ENCODE measurements at regions of chr20 and their contacts with region 1.

Region 1: GRCh38 chr20:36808317-36809257 is 35.0 kb upstream of the DSN1 start:
- DNase-seq: peak; percentile 88
- ATAC-seq: peak; percentile 77
- H3K4me3 Mint-ChIP-seq: no peak overlapping the region
- H3K27ac Mint-ChIP-seq: no peak overlapping the region
- H3K4me1 Mint-ChIP-seq: no peaks in the 10 kb centered on the region
- H3K27me3 Mint-ChIP-seq: no peaks in the 10 kb centered on the region
- CTCF ChIP-seq: peak; percentile 97

Region 2: DNA sequence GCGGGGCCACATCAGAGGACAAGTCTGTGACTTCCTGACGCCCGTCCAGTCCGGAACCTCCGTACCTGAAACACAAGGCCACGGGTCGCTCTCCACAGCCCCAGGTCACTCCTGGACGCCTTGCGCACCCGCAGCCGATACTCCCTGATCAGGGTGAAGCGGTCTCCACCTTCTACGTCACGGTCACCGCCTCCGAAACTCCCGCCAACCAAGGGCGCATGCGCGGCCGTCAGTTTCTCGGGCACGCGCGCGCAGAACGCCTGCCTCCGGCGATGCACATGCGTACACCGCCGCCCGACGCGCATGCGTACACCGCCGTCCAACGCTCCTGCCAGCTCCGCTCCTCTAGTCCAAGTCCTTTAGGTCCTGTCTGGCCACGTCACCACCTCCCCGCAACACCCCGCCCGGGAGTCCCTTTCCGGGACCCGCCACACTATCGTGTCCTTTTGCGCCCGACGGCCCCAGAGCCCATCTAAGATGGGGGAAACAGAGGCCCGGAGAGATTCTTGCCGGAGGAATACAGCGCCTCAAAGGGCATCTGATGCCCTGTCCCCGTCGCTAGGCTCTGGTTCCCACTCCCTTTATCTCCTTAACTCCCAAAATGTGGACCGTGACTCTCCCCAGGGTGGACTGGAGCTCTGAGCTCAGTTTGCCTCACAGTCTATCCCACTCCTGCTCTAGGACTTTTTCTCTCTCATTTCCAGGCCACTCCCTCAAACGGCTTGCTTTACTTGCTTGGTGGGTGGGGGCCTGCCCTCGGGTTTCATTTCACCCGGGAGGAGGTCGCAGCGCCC is 34.8 kb before region 1 on chr20 and contains the start of gene DSN1:
- CTCF ChIA-PET with region 1: interaction called, 13 read pairs
- POLR2A ChIA-PET with region 1: no interaction called
- intact Hi-C with region 1: no loop called
- DNase-seq: peak; percentile 98
- ATAC-seq: peak; percentile 89
- H3K4me3 Mint-ChIP-seq: peak within 1 kb of the TSS; percentile 92
- H3K27ac Mint-ChIP-seq: peak within 1 kb of the TSS; percentile 99
- H3K4me1 Mint-ChIP-seq: peaks cover 10% of the 10 kb centered on the region
- H3K27me3 Mint-ChIP-seq: no peaks in the 10 kb centered on the region
- CTCF ChIP-seq: no peak
- total RNA-seq, gene DSN1: 21.6 to 23.9 TPM

Region 3: DNA sequence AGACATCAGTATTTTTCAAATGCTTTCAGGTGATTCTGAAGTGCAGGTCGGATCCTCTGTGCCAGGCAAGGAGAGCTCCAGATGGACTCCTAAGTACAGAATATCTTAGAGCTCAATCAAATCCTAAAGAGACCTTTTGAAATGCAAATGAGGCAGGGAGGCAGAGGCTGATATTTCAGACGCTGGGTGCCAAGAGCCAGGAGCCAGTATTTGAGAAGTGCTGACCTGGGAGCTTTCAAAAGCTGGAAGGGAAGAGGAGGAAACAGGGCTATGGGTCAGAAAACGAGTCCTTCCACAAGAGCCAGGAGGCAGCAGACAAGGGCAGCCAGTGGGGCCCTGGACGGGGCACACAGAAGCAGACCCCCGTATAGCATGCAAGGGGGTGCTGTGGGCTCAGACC is 11.1 kb after region 1 on chr20:
- CTCF ChIA-PET with region 1: interaction called, 17 read pairs
- POLR2A ChIA-PET with region 1: no interaction called
- intact Hi-C with region 1: no loop called
- DNase-seq: no peak
- ATAC-seq: no peak
- H3K4me3 Mint-ChIP-seq: no peak overlapping the region
- H3K27ac Mint-ChIP-seq: no peak overlapping the region
- H3K4me1 Mint-ChIP-seq: no peaks in the 10 kb centered on the region
- H3K27me3 Mint-ChIP-seq: no peaks in the 10 kb centered on the region
- CTCF ChIP-seq: no peak

Region 4: DNA sequence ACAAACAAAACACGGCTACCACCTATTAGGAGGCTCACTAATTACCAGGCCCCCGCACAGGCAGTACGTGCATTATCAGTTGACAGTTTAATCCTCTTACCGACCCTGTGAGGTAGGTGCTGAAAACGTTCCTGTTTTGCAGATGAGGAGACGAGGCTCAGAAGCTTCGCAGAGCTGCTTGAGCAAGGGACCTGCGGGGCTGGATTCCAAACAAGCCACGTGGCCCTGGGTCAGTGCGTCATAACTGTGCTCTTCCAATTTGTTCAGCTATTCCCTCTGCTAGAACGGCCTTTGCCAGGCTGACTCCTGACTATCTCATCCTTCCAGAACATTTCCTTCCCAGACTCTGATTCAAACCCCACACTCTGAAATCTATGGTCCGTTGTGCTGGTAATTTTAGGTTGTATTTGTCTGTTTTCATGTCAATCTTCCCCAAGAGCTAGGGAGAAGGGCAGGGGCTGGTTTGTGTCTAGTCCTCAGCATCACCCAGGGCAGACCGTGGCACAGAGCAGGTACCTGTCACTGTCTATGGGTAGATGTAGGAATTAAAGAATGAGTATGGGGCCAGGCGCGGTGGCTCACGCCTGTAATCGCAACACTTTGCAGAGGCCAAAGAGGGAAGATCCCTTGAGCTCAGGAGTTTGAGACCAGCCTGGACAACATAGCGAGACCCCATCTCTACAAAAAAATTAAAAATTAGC is 38.6 kb after region 1 on chr20:
- CTCF ChIA-PET with region 1: interaction called, 21 read pairs
- POLR2A ChIA-PET with region 1: interaction called, 3 read pairs
- intact Hi-C with region 1: no loop called
- DNase-seq: no peak
- ATAC-seq: no peak
- H3K4me3 Mint-ChIP-seq: no peak overlapping the region
- H3K27ac Mint-ChIP-seq: no peak overlapping the region
- H3K4me1 Mint-ChIP-seq: peaks cover 27% of the 10 kb centered on the region
- H3K27me3 Mint-ChIP-seq: no peaks in the 10 kb centered on the region
- CTCF ChIP-seq: no peak

Region 5: GRCh38 chr20:36886859-36887751 is 78.5 kb after region 1 on chr20:
- CTCF ChIA-PET with region 1: interaction called, 21 read pairs
- POLR2A ChIA-PET with region 1: no interaction called
- intact Hi-C with region 1: no loop called
- DNase-seq: peak; percentile 91
- ATAC-seq: peak; percentile 99
- H3K4me3 Mint-ChIP-seq: no peak overlapping the region
- H3K27ac Mint-ChIP-seq: no peak overlapping the region
- H3K4me1 Mint-ChIP-seq: peaks cover 11% of the 10 kb centered on the region
- H3K27me3 Mint-ChIP-seq: no peaks in the 10 kb centered on the region
- CTCF ChIP-seq: peak; percentile 94

Measured in activated CD8-positive, alpha-beta T cell treated with anti-CD3 and anti-CD28 coated beads for 36 hours (primary cell).